Pancreas (tissue), 10 donors: ENCODE measurements at regions of chrX and their contacts with region 1.

Region 1: GRCh38 chrX:102599951-102600579 is 750 bp downstream of the ARMCX5 start:
- DNase-seq: no peak
- ATAC-seq: peak in 3 of 4 donors; percentile 34 to 59 (median 54)
- H3K4me3 ChIP-seq: peak overlapping the region; percentile 23 to 47 (median 34)
- H3K27ac ChIP-seq: peak overlapping the region; percentile 29 to 79 (median 59)
- H3K4me1 ChIP-seq: no peaks in the 10 kb centered on the region
- H3K27me3 ChIP-seq: peaks cover 0 to 3% (median 0%) of the 10 kb centered on the region in 4 donors
- CTCF ChIP-seq: no peak

Region 2: DNA sequence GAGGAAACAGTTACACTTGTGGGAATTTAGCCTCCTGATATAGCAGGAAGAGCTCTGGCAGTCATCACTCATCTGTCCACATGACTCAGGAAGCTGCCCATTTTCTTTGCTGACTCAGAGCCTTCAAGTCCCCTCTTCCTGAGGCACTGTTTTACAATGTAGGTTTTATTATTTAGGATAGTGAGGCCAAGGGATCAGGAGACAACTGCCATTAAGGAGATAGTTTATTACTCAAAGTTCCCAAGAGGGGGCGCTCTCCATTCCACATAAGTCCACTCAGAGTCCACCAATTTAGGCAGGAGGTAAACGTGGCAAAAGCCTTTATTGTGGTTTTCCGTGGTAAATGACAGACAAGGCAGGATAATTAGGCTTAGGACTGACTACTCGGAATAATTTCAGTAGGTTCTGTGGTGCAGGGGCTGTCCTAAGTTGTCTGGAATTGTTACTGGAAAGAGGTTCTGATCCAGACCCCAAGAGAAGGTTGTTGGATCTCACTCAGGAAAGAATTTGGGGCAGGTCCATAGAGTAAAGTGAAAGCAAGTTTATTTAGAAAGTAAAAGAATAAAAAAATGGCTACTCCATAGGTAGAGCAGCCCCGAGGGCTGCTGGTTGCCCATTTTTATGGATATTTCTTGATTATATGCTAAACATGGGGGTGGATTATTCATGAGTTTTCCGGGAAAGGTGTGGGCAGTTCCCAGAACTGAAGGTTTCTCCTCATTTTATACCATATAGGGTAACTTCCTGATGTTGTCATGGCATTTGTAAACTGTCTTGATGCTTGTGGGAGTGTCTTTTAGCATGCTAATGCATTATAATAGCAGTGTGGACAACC is 241.0 kb after region 1 on chrX:
- intact Hi-C with region 1: loop called in 1 of 3 experiments (anchors 10 kb)
- DNase-seq: no peak
- ATAC-seq: no peak
- H3K4me3 ChIP-seq: no peak overlapping the region
- H3K27ac ChIP-seq: no peak overlapping the region
- H3K4me1 ChIP-seq: peaks cover 0 to 5% (median 0%) of the 10 kb centered on the region in 3 donors
- H3K27me3 ChIP-seq: peaks cover 0 to 9% (median 0%) of the 10 kb centered on the region in 4 donors
- CTCF ChIP-seq: no peak